Activated CD4-positive, alpha-beta T cell treated with anti-CD3 and anti-CD28 coated beads, Interleukin-2, amount 10 ng/mL, durations not matched to agents 24 days and 14 days (primary cell): ENCODE measurements at regions of chr20 and their contacts with region 1.

Region 1: GRCh38 chr20:50690634-50691572 is at the start of gene RIPOR3:
- DNase-seq: no peak
- H3K4me3 Mint-ChIP-seq: no peak within 1 kb of the TSS
- H3K27ac Mint-ChIP-seq: no peak within 1 kb of the TSS
- H3K4me1 Mint-ChIP-seq: peaks cover 6% of the 10 kb centered on the region
- H3K27me3 Mint-ChIP-seq: peaks cover 50% of the 10 kb centered on the region
- total RNA-seq, gene RIPOR3: not detected in 2 replicates

Region 2: DNA sequence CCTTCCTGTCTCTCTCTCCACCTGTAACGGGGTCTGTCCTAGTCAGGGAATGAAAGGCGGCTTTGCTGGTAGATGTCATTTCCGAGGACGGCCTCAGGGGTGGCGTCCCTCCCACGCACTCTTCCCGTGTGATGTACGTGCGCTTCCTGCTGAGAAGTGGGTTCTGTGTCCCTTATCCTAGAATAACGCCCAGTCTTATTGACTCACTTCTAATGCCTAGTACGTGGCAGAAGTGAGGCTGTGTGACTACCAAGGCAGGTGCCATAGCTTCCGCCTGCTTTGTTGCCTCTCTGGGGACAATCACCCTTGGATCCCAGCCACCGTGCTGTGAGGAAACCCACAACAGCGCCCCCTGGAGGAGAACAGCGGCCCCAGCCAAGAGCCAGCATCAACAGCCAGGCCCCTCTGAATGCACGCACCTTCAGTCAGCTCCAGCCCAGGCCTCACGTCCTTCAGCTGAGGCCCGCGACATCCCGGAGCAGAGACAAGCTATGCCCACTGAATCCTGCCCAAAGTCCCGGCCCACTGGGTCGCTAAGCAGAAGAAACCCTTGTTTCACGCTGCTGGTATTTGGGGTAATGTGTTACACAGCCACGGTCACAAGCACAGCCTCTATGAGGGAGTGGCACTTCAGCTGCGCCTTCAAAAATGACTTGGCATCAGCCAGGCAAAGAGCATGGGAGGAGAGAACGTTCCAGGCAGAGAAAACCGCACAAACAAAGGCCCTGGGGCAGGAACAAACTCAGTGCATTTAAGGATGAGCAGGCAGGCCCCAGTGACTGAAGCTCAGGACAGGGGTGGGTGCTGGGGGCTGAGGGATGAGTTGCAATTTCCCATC is 627.4 kb after region 1 on chr20:
- intact Hi-C with region 1: loop called (anchors 10 kb)
- DNase-seq: peak; percentile 79
- H3K4me3 Mint-ChIP-seq: no peak overlapping the region
- H3K27ac Mint-ChIP-seq: no peak overlapping the region
- H3K4me1 Mint-ChIP-seq: peaks cover 3% of the 10 kb centered on the region
- H3K27me3 Mint-ChIP-seq: no peaks in the 10 kb centered on the region